PC-3 (cell line): ENCODE measurements at regions of chrX and their contacts with region 1.

Region 1: GRCh38 chrX:96883608-96884007 is at the start of gene RPA4:
- DNase-seq: no peak
- ATAC-seq: no peak
- H3K4me3 ChIP-seq: no peak within 1 kb of the TSS
- H3K27ac ChIP-seq: no peak within 1 kb of the TSS
- H3K4me1 ChIP-seq: no peaks in the 10 kb centered on the region
- H3K27me3 ChIP-seq: no peaks in the 10 kb centered on the region
- CTCF ChIP-seq: no peak
- total RNA-seq, gene RPA4: 1.4 and 3.0 TPM in 2 replicates

Region 2: GRCh38 chrX:96770315-96770714 is 113.3 kb before region 1 on chrX:
- CTCF ChIA-PET with region 1: no interaction called
- POLR2A ChIA-PET with region 1: interaction called, 22 read pairs
- intact Hi-C with region 1: no loop called
- DNase-seq: peak; percentile 52
- ATAC-seq: no peak
- H3K4me3 ChIP-seq: no peak overlapping the region
- H3K27ac ChIP-seq: no peak overlapping the region
- H3K4me1 ChIP-seq: no peaks in the 10 kb centered on the region
- H3K27me3 ChIP-seq: no peaks in the 10 kb centered on the region
- CTCF ChIP-seq: peak; percentile 69